Posterior vena cava (tissue), 2 donors: ENCODE measurements at regions of chr7 and their contacts with region 1.

Region 1: GRCh38 chr7:151277631-151278030 is 29.1 kb upstream of the SMARCD3 start:
- DNase-seq: peak; percentile 75

Region 2: DNA sequence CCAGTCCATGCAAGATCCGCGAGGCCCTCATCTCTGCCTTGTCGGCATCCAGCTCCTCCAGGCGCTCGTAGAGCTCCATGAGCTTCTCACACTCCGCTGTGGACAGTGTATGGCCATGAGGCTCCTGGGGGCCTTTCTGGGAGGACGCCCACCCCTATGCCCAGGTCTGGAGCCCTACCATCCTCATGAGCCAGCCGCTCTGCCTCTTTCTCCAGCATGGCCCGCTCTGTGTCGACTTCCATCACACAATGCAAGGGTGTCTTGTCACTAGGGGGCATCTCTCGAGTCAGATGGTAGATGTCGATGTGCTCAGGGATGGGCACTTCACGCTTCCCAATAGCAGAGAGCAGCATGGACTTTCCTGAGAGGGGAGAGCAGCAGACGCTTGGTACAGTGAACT is 53.9 kb before region 1 on chr7:
- intact Hi-C with region 1: no loop called
- DNase-seq: no peak

Region 3: DNA sequence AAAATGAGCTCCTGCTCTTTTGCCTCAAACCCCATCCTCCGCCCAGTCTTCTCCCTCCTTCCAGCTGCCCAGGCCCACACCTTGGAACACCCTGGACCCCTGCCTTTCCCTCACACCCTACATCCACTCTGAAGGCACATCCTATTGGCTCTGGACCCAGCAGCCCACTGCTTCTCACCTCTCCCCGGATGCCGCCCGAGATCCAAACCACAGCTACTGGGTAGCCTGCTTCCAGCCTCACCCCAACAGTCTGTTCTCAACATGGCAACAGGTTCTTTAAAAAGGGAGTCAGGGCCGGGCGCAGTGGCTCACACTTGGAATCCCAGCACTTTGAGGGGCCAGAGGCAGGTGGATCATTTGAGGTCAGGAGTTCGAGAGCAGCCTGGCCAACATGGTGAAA is 19.6 kb before region 1 on chr7:
- intact Hi-C with region 1: loop called in 1 of 2 experiments (anchors 2 kb)
- DNase-seq: no peak

Region 4: DNA sequence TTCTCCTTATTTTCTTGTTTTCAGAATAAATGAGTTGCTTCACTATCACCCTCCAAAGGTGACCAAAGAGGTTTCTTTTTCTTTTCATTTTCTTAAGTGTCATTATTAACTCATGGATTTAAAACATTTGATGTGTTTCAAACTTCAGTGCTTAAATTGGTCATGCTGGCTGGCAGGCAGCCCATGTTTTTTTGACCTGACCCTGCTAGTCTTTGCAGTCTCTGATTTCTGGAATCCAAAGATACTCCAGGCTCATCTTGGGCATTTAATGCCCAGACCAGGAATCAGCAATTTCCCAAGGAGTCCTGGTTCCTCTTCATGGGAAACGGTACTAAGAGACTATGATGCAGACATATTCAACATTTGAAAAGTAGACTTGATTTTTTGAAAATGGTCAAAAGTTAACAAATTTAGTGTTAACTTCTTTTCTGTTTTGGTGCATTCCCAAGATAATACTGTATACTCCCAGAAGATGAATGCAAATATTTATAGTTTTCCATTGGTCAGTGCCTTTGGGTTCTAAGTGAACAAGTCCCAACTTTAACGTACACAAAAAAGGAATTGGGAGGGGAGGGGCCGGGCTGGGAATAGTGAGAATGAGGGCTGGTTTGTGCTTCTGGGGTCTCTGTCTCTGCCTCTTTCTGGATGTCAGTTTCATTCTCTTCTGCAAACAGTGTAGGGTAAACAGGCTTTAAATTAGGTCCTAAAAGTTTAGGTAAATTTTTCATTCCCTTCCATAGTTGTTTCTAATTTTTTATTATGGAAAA is 83.7 kb after region 1 on chr7:
- intact Hi-C with region 1: no loop called
- DNase-seq: peak; percentile 42